CD8-positive, alpha-beta T cell (primary cell): ENCODE measurements at regions of chr1 and their contacts with region 1.

Region 1: DNA sequence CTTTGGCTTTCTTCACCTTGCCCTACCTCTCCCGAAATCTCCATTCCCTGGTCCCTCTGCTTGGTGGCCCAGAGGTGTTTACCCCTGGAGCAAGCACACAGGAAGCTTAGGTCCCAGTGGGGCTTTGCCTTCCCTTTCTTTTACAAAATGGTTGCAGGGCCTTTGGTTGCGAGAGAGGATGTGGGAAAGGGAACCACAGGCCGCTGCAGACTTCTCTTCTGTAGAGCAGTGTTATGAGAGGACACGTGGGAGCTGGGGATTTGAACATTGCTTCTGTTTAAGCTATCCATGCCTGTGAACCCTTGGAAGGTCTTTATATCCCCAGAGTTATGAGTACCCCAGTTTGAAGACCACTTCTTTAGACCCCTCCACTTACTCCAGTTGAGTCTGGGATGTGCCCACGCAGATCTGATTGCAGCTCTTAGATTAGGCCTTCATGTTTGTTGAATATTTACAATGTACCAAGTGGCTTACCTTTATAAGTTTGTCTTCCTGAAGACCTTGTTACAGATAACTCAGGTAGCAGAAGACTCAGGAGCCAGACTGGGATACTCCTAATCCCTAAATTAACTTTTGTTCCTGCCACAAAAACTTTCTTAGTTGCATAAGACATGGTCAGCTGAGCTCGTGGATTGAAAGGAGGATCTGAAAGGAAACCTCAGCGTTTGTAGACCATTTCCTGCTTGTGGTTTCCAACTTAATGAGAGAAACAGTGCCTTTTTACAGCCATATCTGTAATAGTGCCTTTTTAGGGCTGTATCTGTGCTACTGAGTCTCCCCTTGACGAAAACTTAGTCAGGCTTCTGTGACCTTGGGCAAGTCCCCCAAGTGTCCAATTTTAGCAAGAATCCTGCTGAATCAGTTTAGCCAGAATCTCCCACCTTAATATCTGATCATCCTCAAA is 21.9 kb upstream of the IVNS1ABP start:
- DNase-seq: peak in 8 of 9 experiments; percentile 11 to 79 (median 50)
- ATAC-seq: peak; percentile 81
- H3K4me3 ChIP-seq: peak overlapping the region in 1 of 2 experiments; percentile 15
- H3K4me3 Mint-ChIP-seq: peak overlapping the region; percentile 55
- H3K27ac ChIP-seq: peak overlapping the region; percentile 19 to 57
- H3K27ac Mint-ChIP-seq: peak overlapping the region; percentile 81
- H3K4me1 ChIP-seq: peaks cover 33% of the 10 kb centered on the region
- H3K4me1 Mint-ChIP-seq: peaks cover 34% of the 10 kb centered on the region
- H3K27me3 ChIP-seq: no peaks in the 10 kb centered on the region
- H3K27me3 Mint-ChIP-seq: no peaks in the 10 kb centered on the region
- CTCF ChIP-seq: no peak

Region 2: GRCh38 chr1:185281245-185281644 is 57.7 kb before region 1 on chr1:
- CTCF ChIA-PET with region 1: no interaction called
- POLR2A ChIA-PET with region 1: no interaction called
- intact Hi-C with region 1: no loop called
- DNase-seq: peak in 7 of 9 experiments; percentile 12 to 72 (median 36)
- ATAC-seq: peak; percentile 92
- H3K4me3 ChIP-seq: no peak overlapping the region
- H3K4me3 Mint-ChIP-seq: peak overlapping the region; percentile 72
- H3K27ac ChIP-seq: peak overlapping the region; percentile 7 to 63
- H3K27ac Mint-ChIP-seq: peak overlapping the region; percentile 96
- H3K4me1 ChIP-seq: peaks cover 47% of the 10 kb centered on the region
- H3K4me1 Mint-ChIP-seq: peaks cover 64% of the 10 kb centered on the region
- H3K27me3 ChIP-seq: no peaks in the 10 kb centered on the region
- H3K27me3 Mint-ChIP-seq: no peaks in the 10 kb centered on the region
- CTCF ChIP-seq: no peak

Region 3: DNA sequence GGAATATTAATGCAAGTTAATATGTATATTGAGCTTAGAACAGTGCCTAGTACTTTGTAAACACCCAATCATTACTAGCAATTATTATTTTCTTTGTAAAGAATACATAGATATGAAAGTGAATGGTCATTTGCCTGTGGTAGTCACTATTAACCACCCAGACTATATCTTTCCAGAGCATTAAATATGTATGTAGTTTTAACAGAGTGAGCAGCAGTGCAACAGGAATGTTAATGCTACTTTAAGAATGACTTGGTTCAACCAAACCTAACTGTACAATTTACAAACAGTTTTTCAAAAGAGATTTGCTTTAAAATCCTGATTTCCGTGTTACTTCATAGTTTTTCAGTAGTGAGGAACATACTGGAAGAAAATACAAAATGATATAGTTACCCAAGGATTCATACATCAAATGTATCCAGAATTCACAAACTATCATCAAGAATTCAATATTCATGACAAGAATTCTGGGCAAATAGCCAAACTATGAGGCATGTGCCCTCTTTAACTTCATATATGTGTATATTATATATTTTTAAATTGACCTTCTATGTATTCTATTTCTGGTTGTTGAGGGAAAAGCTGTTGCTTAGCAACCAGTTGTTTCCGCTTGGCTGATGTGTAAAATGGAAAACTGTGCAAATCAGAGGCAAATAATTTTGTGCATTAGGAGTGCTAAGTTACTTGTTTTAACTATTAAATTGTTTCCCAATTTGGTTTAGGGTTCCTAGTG is 12.9 kb after region 1 on chr1:
- CTCF ChIA-PET with region 1: interaction called, 5 read pairs
- POLR2A ChIA-PET with region 1: interaction called, 3 read pairs
- intact Hi-C with region 1: loop called in 1 of 2 experiments (anchors 2 kb)
- DNase-seq: no peak
- ATAC-seq: no peak
- H3K4me3 ChIP-seq: no peak overlapping the region
- H3K4me3 Mint-ChIP-seq: no peak overlapping the region
- H3K27ac ChIP-seq: no peak overlapping the region
- H3K27ac Mint-ChIP-seq: no peak overlapping the region
- H3K4me1 ChIP-seq: no peaks in the 10 kb centered on the region
- H3K4me1 Mint-ChIP-seq: peaks cover 9% of the 10 kb centered on the region
- H3K27me3 ChIP-seq: no peaks in the 10 kb centered on the region
- H3K27me3 Mint-ChIP-seq: no peaks in the 10 kb centered on the region
- CTCF ChIP-seq: no peak

Region 4: GRCh38 chr1:185559684-185560331 is 220.8 kb after region 1 on chr1:
- CTCF ChIA-PET with region 1: interaction called, 3 read pairs
- POLR2A ChIA-PET with region 1: no interaction called
- intact Hi-C with region 1: loop called in 1 of 2 experiments (anchors 5 kb)
- DNase-seq: peak; percentile 8 to 85 (median 51)
- ATAC-seq: peak; percentile 69
- H3K4me3 ChIP-seq: no peak overlapping the region
- H3K4me3 Mint-ChIP-seq: peak overlapping the region; percentile 40
- H3K27ac ChIP-seq: peak overlapping the region in 1 of 2 experiments; percentile 63
- H3K27ac Mint-ChIP-seq: peak overlapping the region; percentile 70
- H3K4me1 ChIP-seq: peaks cover 30% of the 10 kb centered on the region
- H3K4me1 Mint-ChIP-seq: peaks cover 48% of the 10 kb centered on the region
- H3K27me3 ChIP-seq: no peaks in the 10 kb centered on the region
- H3K27me3 Mint-ChIP-seq: no peaks in the 10 kb centered on the region
- CTCF ChIP-seq: no peak